ENCODE measurements at regions of chr5 and their contacts with region 1.

Region 1: GRCh38 chr5:174045470-174046025 is at the start of gene NSG2:
- DNase-seq: peak; percentile 75 to 95 (median 92)
- H3K4me3 ChIP-seq: peak within 1 kb of the TSS in 58 of 59 donors; percentile 7 to 68 (median 48)
- H3K27ac ChIP-seq: peak within 1 kb of the TSS in 48 of 59 donors; percentile 3 to 84 (median 60)
- H3K27me3 ChIP-seq: peaks cover 0 to 6% (median 0%) of the 10 kb centered on the region in 45 donors
- CTCF ChIP-seq: peak; percentile 59 to 99 (median 94)
- total RNA-seq, gene NSG2: 56.1 to 461 (median 222) TPM

Region 2: DNA sequence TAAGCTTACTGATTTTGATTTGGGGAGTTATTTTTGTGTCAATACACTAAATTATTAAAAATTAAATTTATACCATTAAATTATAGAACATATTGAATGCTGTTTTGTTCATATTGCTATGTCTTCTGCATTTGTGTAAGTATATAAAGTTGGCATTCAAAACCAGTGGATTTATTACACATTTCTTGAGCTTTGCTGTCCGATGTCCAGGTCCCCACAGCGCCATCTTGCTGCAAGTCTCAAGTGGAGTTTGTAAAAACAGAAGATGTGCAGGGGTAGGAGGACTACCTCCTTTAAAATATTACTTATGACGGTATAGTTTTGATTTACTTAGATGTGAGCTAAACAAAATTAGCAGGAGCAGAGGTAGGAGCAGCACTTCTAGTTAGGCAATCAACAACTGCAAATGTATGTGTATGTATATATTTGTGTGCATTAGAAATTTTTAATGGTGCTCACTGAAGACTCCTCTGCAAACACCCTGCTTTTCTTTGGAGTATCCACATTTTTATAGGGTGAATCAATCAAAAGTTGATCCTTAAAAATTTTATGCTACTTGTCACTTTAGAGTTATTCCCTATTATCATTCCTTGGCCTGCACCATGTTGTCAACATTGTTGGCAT is 120.0 kb before region 1 on chr5:
- intact Hi-C with region 1: no loop called
- DNase-seq: peak in 7 of 10 donors; percentile 55 to 83 (median 67)
- H3K4me3 ChIP-seq: peak overlapping the region in 8 of 59 donors; percentile 2 to 30 (median 6)
- H3K27ac ChIP-seq: peak overlapping the region in 55 of 59 donors; percentile 16 to 94 (median 83)
- H3K27me3 ChIP-seq: no peaks in the 10 kb centered on the region
- CTCF ChIP-seq: peak; percentile 35 to 75 (median 62)

Region 3: DNA sequence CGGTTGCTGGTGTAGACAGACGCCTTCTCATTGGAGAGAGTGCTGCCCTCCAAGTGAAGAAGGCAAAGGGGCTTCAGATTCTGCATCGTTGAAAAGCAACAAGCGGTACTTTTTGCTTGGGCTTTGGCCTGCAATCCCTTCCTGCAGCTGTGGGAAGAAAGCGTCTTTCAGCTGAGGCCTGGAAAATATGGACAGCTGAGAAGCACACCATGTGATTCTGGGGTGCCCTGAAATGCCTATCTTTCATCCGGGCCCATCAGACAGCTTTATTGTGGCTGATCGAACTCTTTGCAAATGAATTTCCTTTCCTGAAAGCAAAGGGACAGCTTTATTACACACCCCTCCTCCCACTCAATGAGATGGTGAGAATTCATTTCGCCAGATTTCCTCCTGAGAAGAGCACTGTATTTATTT is 73.9 kb after region 1 on chr5:
- intact Hi-C with region 1: loop called in 1 of 2 experiments (anchors 10 kb)
- DNase-seq: peak in 6 of 10 donors; percentile 41 to 71 (median 57)
- H3K4me3 ChIP-seq: peak overlapping the region in 1 of 59 donors; percentile 14
- H3K27ac ChIP-seq: peak overlapping the region; percentile 7 to 95 (median 86)
- H3K27me3 ChIP-seq: no peaks in the 10 kb centered on the region
- CTCF ChIP-seq: peak in 2 of 56 donors; percentile 8 to 22

Region 4: DNA sequence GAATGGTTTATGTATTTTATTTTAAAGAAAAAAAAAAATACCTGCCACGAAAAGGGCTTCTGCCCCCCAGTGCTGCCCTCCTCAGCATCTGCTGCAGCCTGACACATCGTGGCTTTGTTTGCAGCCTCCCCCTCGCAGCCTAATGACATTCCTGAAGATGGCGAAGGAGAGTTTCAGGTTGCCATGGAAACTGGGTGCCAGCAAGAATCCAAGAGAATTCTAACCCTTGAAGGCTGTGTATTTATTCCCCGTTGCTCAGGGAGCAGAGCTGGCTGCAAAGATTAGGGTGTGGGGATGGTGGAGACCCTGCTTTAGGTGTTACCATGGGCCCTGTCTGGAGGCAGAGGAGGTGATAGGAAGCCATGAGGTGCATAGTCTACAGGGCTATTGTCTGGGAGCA is 126.6 kb after region 1 on chr5:
- intact Hi-C with region 1: loop called in 1 of 2 experiments (anchors 5 kb)
- DNase-seq: peak in 8 of 10 donors; percentile 38 to 72 (median 52)
- H3K4me3 ChIP-seq: no peak overlapping the region
- H3K27ac ChIP-seq: peak overlapping the region in 28 of 59 donors; percentile 1 to 66 (median 46)
- H3K27me3 ChIP-seq: no peaks in the 10 kb centered on the region
- CTCF ChIP-seq: peak in 1 of 56 donors; percentile 6

Region 5: GRCh38 chr5:174311531-174312269 is 266.2 kb after region 1 on chr5:
- intact Hi-C with region 1: loop called (anchors 1 kb)
- DNase-seq: peak; percentile 67 to 88 (median 78)
- H3K4me3 ChIP-seq: peak overlapping the region; percentile 26 to 69 (median 56)
- H3K27ac ChIP-seq: peak overlapping the region in 24 of 59 donors; percentile 3 to 86 (median 52)
- H3K27me3 ChIP-seq: no peaks in the 10 kb centered on the region
- CTCF ChIP-seq: peak; percentile 77 to 98 (median 93)

Region 6: DNA sequence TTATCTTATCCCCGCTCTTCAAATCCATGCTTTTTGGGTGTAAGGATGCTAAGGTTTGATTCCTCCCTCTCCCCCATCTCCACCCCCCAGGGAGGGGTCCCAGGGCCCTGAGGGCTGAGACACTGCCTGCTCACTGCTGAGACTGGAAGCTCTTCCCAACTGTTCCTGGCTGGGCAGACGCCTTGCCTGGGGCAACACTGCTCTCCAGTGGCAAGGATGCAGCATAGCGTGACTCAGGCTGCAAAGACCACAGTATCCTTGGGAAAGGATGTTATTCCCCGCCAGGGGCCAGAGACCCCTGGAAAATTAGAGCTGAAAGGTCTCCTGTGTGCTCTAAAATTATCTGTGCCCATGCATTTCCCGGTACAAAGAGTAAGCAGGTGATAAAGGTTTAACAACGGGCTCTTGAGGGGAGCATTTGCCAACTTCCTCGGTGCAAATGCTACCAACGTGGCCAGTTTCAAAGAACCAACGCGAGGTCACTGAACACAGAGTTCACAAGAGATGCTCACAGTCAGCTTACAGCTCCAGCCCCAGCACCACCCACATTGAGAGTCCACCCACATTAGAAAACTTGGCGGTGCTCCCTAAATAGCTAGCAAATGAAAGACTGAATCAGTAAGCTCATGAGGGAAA is 271.8 kb after region 1 on chr5:
- intact Hi-C with region 1: loop called (anchors 1 kb)
- DNase-seq: peak in 8 of 10 donors; percentile 38 to 80 (median 70)
- H3K4me3 ChIP-seq: peak overlapping the region in 21 of 59 donors; percentile 5 to 48 (median 29)
- H3K27ac ChIP-seq: no peak overlapping the region
- H3K27me3 ChIP-seq: peaks cover 0 to 8% (median 0%) of the 10 kb centered on the region in 45 donors
- CTCF ChIP-seq: peak; percentile 52 to 92 (median 81)